Activated CD4-positive, alpha-beta memory T cell treated with anti-CD3 and anti-CD28 coated beads for 36 hours (primary cell): ENCODE measurements at regions of chrX and their contacts with region 1.

Region 1: DNA sequence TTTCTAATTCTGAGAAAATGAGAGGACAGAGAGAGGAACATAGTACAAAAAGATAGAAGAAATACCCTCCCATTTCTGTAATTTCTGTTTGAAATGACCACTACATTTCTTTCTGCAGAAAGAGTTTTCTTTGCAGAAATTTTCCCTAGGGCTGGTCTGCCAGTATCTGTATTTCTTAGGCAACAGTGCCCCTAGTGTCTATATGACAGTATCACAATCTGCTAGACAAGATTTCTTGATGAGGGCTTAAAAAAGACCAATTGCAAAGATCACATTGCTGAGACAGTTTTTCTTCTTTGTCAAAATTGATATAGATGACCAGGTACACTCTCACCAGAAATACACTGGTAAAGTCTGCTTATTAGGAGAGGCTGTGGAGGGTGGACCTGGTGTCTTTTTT is 81.0 kb upstream of the ZDHHC15 start:
- DNase-seq: no peak
- H3K4me3 Mint-ChIP-seq: no peak overlapping the region
- H3K27ac Mint-ChIP-seq: no peak overlapping the region
- H3K4me1 Mint-ChIP-seq: no peaks in the 10 kb centered on the region
- H3K27me3 Mint-ChIP-seq: no peaks in the 10 kb centered on the region

Region 2: DNA sequence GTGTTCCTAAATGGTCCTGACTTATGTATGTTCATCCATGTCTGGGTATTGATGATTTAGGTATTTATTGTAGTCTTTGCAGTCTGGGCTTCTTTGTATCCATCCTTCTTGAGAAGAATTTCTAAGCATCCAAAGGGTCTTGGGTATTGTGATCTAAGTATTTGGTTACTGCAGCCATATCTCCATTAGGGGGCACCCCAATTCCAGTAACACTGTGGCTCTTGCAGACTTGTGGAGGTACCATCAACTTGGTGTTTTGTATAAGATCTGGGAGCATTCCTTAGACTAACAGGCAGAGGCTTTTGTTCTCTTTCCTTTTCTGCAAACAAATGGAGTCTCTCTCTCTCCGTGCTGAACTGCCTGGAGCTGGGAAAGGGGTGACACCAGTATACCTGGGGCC is 564.9 kb before region 1 on chrX:
- CTCF ChIA-PET with region 1: no interaction called
- POLR2A ChIA-PET with region 1: no interaction called
- intact Hi-C with region 1: loop called (anchors 10 kb)
- DNase-seq: peak; percentile 15
- H3K4me3 Mint-ChIP-seq: no peak overlapping the region
- H3K27ac Mint-ChIP-seq: no peak overlapping the region
- H3K4me1 Mint-ChIP-seq: no peaks in the 10 kb centered on the region
- H3K27me3 Mint-ChIP-seq: no peaks in the 10 kb centered on the region

Region 3: DNA sequence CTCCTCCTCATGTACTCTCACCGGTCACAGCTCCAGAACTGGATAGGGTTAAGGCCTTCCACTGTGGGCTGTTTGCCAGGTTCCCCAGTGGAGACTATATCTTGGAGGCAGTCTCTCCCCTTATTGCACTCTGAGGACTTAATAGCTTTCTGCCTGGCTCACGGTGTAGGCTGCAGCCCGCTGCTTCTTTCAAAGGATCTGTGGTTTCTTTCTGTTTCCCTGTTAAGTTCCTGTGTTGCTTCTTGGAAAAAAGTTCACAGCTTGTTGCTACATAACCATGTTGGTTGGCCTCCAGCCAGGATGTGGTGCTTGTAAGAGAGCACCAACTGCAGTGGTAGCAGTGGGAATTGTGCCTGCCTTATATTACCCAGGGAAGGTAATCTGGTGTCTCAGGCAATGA is 56.0 kb before region 1 on chrX:
- CTCF ChIA-PET with region 1: no interaction called
- POLR2A ChIA-PET with region 1: no interaction called
- intact Hi-C with region 1: no loop called
- DNase-seq: no peak
- H3K4me3 Mint-ChIP-seq: no peak overlapping the region
- H3K27ac Mint-ChIP-seq: no peak overlapping the region
- H3K4me1 Mint-ChIP-seq: no peaks in the 10 kb centered on the region
- H3K27me3 Mint-ChIP-seq: no peaks in the 10 kb centered on the region